Endothelial cell of umbilical vein (primary cell): ENCODE measurements at regions of chr3 and their contacts with region 1.

Region 1: DNA sequence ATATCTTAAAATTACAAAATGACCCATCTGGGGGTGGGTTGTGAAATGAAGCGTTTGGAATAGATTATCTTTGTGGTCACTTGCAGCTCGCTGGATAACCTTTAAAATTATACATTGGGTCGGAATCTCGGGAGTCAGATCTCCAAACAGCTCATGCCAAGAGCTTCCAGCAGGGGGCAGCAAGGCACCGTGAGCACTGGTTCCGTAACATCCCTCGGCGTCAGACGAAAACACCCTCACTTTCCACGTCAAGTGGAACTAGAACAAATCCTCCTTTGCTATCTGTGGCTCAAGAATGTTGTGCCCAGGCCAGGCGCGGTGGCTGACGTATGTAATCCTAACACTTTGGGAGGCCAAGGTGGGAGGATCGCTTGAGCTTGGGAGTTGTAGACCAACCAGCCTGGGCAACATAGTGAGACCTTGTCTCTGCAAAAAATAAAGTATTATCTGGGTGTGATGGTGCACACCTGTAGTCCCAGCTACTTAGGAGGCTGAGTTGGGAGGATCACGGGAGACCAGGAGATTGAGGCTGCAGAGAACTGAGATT is 31.1 kb downstream of the UMPS start:
- DNase-seq: peak; percentile 75
- H3K4me3 ChIP-seq: no peak overlapping the region
- H3K27ac ChIP-seq: no peak overlapping the region
- H3K4me1 ChIP-seq: no peaks in the 10 kb centered on the region
- H3K27me3 ChIP-seq: no peaks in the 10 kb centered on the region
- CTCF ChIP-seq: peak; percentile 88 to 92
- POLR2A ChIP-seq: no peak

Region 2: GRCh38 chr3:123576122-123576521 is 1185.2 kb before region 1 on chr3:
- CTCF ChIA-PET with region 1: no interaction called
- POLR2A ChIA-PET with region 1: no interaction called
- dilution Hi-C with region 1: no loop called
- intact Hi-C with region 1: no loop called
- DNase-seq: peak; percentile 33
- H3K4me3 ChIP-seq: no peak overlapping the region
- H3K27ac ChIP-seq: no peak overlapping the region
- H3K4me1 ChIP-seq: no peaks in the 10 kb centered on the region
- H3K27me3 ChIP-seq: no peaks in the 10 kb centered on the region
- CTCF ChIP-seq: no peak
- POLR2A ChIP-seq: no peak

Region 3: DNA sequence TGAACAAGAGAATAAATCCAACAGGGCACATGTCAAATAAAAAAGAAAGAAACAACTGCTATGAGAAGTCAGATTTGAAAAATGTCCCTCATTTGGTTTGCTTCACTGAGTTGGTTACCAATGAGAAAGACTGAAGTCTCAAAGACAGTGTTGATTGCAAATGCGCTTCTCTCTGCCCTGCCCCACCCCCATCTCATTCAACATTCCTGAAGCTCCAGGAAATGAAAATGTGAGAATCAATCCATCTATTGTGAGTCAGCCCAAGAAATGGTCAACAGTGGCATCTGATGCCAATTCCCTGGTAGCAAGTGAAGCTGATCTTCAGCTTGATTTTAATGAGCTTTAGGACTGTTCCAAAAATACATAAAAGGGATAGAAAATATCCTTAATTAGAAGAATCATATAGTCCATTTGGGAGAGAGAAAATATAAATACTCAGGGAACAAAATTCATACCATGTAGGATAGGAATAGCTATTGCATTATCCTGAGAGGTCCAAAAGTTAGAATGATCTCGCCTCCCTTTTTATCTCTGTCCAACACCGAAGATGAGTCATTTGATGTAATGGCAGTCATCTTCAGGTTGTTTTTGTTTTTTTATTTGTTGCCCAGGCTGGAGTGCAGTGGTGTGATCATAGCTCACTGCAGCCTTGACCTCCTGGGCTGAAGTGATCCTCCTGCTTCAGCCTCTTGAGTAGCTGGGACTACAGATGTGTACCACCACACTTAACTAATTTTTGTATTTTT is 231.3 kb before region 1 on chr3:
- CTCF ChIA-PET with region 1: no interaction called
- POLR2A ChIA-PET with region 1: no interaction called
- dilution Hi-C with region 1: no loop called
- intact Hi-C with region 1: no loop called
- DNase-seq: peak; percentile 15
- H3K4me3 ChIP-seq: no peak overlapping the region
- H3K27ac ChIP-seq: no peak overlapping the region
- H3K4me1 ChIP-seq: peaks cover 3% of the 10 kb centered on the region
- H3K27me3 ChIP-seq: peaks cover 0 to 2% of the 10 kb centered on the region in 2 experiments
- CTCF ChIP-seq: no peak
- POLR2A ChIP-seq: no peak

Region 4: DNA sequence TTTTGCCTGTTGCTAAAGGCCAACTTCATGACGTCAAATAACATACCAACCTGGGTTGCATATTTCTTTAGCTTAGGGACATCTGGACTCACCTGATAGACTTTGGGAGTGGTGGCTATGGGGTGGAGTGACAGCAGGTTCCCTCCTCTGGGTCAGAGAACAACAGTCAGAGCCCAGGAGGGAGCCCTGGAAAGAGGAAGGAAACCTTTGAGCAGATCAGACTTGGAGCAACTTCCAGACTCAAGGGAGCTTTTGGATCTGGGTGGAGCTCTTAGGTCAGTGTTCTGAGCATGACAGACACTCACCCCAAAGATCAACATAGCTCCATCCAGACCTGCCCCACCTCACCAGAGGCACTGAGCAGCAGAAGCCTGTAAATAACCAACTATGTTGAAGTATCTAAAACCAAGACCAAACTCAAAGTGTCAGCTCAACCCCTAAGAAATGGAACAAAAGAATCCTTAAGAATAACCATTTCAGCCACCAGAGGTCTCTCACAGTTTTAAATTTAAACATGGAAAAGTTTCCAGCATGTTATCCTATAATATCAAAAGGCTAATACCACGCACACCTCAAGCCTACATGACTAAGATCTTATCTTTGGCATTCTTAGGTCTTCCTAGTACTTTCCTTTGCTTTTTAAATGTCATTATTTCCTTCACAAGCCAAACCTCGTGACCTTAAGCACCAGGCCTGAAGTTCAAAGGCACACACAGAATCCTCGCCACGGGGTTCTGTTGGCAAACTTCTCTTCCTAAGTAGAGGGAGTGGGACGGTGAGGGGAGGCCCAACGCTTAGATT is 25.3 kb after region 1 on chr3:
- CTCF ChIA-PET with region 1: interaction called, 112 read pairs
- POLR2A ChIA-PET with region 1: no interaction called
- dilution Hi-C with region 1: no loop called
- intact Hi-C with region 1: loop called (anchors 1 kb)
- DNase-seq: peak; percentile 50
- H3K4me3 ChIP-seq: no peak overlapping the region
- H3K27ac ChIP-seq: no peak overlapping the region
- H3K4me1 ChIP-seq: peaks cover 6% of the 10 kb centered on the region
- H3K27me3 ChIP-seq: no peaks in the 10 kb centered on the region
- CTCF ChIP-seq: no peak
- POLR2A ChIP-seq: no peak

Region 5: DNA sequence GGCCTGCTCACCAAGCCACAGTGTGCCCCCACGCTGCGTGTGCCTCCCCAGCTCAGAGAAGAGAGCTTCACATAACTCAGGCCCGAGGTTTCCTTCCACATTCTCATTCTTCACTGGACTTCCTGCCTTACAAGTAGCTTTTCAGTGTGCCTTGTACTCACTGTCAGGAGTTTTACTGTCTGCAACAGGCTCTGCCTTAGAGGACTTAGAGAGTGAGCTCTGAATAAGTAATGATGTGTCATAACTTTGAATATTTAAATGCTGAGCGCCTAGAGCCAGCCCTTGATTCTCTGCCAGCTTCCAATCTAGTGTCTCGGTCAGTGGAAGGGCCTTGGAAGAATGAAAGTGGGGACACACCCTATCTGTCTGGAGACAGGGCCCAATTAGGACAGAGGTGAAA is 84.1 kb after region 1 on chr3:
- CTCF ChIA-PET with region 1: interaction called, 17 read pairs
- POLR2A ChIA-PET with region 1: no interaction called
- dilution Hi-C with region 1: no loop called
- intact Hi-C with region 1: no loop called
- DNase-seq: peak; percentile 70
- H3K4me3 ChIP-seq: no peak overlapping the region
- H3K27ac ChIP-seq: peak overlapping the region; percentile 11
- H3K4me1 ChIP-seq: peaks cover 9% of the 10 kb centered on the region
- H3K27me3 ChIP-seq: no peaks in the 10 kb centered on the region
- CTCF ChIP-seq: no peak
- POLR2A ChIP-seq: no peak

Region 6: GRCh38 chr3:124895756-124896155 is 134.4 kb after region 1 on chr3:
- CTCF ChIA-PET with region 1: interaction called, 424 read pairs
- POLR2A ChIA-PET with region 1: no interaction called
- dilution Hi-C with region 1: loop called (anchors 25 kb)
- intact Hi-C with region 1: no loop called
- DNase-seq: no peak
- H3K4me3 ChIP-seq: no peak overlapping the region
- H3K27ac ChIP-seq: no peak overlapping the region
- H3K4me1 ChIP-seq: no peaks in the 10 kb centered on the region
- H3K27me3 ChIP-seq: no peaks in the 10 kb centered on the region
- CTCF ChIP-seq: no peak
- POLR2A ChIP-seq: no peak

Region 7: DNA sequence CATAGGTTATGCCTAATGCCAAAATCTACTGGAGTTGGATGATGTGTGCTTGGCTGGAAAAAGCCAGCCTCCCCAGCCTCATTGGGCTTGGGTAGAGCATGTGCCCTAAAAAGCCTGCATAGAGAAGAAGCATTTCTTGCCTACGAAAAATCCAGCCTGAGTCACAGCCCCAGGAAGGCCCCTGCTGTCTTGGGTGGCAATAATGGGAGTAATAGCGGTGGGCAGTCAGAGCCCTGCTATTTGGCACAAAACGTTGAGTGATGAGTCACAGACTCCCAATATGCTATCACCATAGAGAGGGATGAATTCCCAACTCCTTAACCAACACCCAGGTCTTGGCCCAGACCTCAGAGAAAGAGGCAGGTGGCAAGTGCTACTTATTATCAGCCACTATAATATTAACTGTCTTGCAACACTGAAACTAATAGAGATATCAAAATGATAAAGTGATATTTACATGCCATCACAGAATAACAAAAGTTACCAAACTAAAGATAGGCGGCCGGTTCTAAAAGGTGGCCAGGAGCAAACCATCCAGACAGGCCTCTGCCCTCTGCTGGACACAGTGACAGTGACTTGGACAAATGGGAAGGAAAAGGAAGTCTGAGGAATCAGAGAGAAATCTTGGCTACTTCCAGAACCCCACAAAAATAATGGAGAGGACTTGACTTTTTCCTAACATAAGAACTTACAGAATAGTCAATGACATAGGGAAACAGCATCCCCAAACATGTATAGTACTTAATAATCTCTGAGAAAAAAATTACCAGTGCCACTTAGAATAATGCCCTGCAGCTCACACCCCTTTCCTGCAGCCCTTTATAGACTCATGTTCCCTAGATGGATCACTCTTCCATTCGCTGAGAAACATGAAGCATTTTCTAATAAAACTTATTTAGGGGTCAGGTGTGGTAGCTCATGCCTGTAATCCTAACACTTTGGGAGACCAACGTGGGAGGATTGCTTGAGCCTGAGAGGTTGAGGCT is 225.1 kb after region 1 on chr3:
- CTCF ChIA-PET with region 1: interaction called, 9 read pairs
- POLR2A ChIA-PET with region 1: no interaction called
- dilution Hi-C with region 1: no loop called
- intact Hi-C with region 1: loop called (anchors 1 kb)
- DNase-seq: peak; percentile 52
- H3K4me3 ChIP-seq: no peak overlapping the region
- H3K27ac ChIP-seq: peak overlapping the region; percentile 61
- H3K4me1 ChIP-seq: peaks cover 29% of the 10 kb centered on the region
- H3K27me3 ChIP-seq: no peaks in the 10 kb centered on the region
- CTCF ChIP-seq: peak; percentile 36 to 37
- POLR2A ChIP-seq: no peak